ENCODE measurements at regions of chr9 and their contacts with region 1.

Region 1: DNA sequence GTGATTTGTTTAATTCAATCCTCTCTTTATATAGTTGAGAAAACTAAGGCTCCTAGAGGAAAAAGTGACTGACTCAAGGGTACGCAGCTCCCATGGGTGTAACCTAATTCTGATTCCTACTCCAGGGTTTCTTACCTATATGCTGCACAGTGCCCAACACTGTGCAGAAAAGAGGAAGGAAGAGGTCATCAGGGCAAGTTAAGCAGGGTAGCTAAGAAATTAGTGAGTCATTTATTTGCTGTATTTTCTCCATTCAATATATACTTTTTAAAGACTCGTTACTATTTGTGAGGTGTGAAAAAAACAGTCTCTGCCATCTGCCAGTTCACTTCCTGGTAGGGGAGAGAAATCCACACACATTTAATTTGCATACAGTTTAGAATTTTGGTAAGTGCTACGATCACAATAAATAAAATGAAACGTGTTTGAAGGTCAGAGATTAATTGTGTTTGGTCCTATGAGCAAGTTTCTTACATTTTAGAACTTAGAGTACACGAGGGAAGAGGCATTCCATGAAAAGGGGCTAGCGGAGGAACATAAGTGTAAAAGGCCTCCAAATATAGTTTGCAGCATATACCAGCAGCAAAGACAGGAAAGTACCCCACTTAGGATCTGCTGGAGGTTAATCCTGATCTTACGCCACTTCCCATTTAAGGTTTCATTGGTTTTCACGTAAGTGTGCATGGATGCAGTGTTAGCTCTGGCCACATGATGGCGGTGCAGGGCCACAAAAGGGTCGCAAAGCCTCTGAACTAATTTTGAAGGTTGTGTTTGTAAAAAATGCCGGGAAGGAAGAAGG is 59.9 kb upstream of the TLR4 start:
- DNase-seq: peak; percentile 78
- H3K4me3 ChIP-seq: peak overlapping the region in 2 of 4 donors; percentile 7 to 36
- H3K27ac ChIP-seq: no peak overlapping the region
- H3K4me1 ChIP-seq: peaks cover 0 to 16% (median 2%) of the 10 kb centered on the region in 4 donors
- H3K27me3 ChIP-seq: peaks cover 13% of the 10 kb centered on the region
- CTCF ChIP-seq: peak; percentile 92 to 96 (median 95)
- EP300 ChIP-seq: no peak
- POLR2A ChIP-seq: no peak

Region 2: GRCh38 chr9:118510711-118511110 is 866.4 kb after region 1 on chr9:
- in situ Hi-C with region 1: no loop called
- intact Hi-C with region 1: loop called (anchors 5 kb)
- DNase-seq: no peak
- H3K4me3 ChIP-seq: no peak overlapping the region
- H3K27ac ChIP-seq: no peak overlapping the region
- H3K4me1 ChIP-seq: no peaks in the 10 kb centered on the region
- H3K27me3 ChIP-seq: no peaks in the 10 kb centered on the region
- CTCF ChIP-seq: no peak
- EP300 ChIP-seq: no peak
- POLR2A ChIP-seq: no peak